ENCODE measurements at regions of chr1 and their contacts with region 1.

Region 1: DNA sequence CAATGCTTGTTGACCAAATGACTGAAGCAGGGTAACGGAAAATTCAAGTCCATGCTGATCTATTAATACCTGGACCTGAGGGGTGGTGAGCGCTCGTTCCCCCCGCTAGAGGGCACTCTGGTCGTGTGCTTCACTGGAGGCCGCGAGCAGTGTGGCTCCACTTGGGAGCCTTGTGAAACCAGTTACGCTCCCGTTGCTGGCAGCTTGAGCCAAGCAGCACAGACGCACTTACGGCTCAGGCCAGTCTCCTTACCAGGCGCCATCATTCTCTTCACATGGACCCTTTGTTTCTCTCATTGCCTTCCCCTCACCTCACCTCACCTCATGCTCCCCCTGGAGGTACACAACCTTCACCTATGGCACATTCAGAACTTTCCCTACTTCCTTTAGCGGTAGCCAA is 49.7 kb upstream of the TSPAN2 start:
- DNase-seq: peak; percentile 60 to 95
- H3K4me3 ChIP-seq: no peak overlapping the region
- H3K27ac ChIP-seq: peak overlapping the region; percentile 54 to 92
- H3K4me1 ChIP-seq: peaks cover 10 to 32% of the 10 kb centered on the region in 2 donors
- H3K27me3 ChIP-seq: no peaks in the 10 kb centered on the region
- CTCF ChIP-seq: peak; percentile 85 to 90 (median 89)

Region 2: DNA sequence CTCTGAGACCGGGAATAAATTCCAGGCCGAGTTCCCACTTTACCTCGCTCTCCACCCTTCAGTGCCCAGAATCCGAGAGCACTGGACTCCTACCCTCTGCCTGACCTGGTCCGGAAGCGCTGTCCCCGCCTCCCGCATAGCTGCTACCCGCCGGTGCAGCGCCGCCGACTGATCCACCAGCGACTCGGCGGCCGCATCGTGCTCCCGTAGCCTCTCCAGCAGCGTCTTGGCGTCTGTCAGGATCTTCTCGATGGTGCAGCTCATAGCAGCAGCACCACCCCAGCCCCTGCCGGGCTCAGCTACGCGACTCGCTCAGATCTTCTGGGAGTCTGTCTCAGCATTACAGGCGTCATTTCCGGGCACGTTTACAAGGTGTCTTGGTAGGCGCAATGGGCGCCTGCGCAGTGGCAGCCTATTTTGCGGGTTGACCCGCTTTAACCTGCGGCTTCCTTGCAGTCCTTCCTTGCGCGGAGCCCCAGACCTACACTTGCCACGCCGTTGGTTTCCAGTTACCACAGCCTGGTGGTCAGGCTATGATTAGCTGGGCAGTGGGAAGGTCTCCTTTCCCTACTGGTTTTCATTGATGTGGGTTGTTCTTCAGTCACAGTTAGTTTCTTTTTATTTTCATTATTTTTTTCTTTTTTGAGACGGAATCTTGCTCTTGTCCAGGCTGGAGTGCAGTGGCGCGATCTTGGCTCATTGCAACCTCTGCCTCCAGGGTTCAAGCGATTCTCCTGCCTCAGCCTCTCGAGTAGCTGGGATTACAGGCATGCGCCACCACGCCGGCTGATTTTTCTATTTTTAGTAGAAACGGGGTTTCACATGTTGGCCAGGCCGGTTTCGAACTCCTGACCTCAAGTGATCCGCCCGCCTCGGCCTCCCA is 358.4 kb before region 1 on chr1 and contains the start of gene SIKE1:
- intact Hi-C with region 1: loop called (anchors 10 kb)
- DNase-seq: peak; percentile 71 to 96
- H3K4me3 ChIP-seq: peak within 1 kb of the TSS; percentile 76 to 92
- H3K27ac ChIP-seq: peak within 1 kb of the TSS; percentile 90
- H3K4me1 ChIP-seq: peaks cover 0 to 8% of the 10 kb centered on the region in 2 donors
- H3K27me3 ChIP-seq: no peaks in the 10 kb centered on the region
- CTCF ChIP-seq: no peak
- total RNA-seq, gene SIKE1: 17.1 TPM

Region 3: GRCh38 chr1:115184951-115185331 is 46.0 kb after region 1 on chr1:
- intact Hi-C with region 1: loop called (anchors 1 kb)
- DNase-seq: peak; percentile 58 to 89
- H3K4me3 ChIP-seq: peak overlapping the region; percentile 12 to 50
- H3K27ac ChIP-seq: peak overlapping the region; percentile 89 to 95
- H3K4me1 ChIP-seq: peaks cover 16 to 39% of the 10 kb centered on the region in 2 donors
- H3K27me3 ChIP-seq: no peaks in the 10 kb centered on the region
- CTCF ChIP-seq: no peak

Region 4: GRCh38 chr1:115337633-115338456 is 198.9 kb after region 1 on chr1 and contains the start of gene NGF:
- intact Hi-C with region 1: loop called (anchors 2 kb)
- DNase-seq: peak; percentile 29 to 89
- H3K4me3 ChIP-seq: peak within 1 kb of the TSS; percentile 56 to 69
- H3K27ac ChIP-seq: peak within 1 kb of the TSS; percentile 87 to 89
- H3K4me1 ChIP-seq: peaks cover 9 to 33% of the 10 kb centered on the region in 2 donors
- H3K27me3 ChIP-seq: no peaks in the 10 kb centered on the region
- CTCF ChIP-seq: no peak
- total RNA-seq, gene NGF: 2.1 TPM

Region 5: DNA sequence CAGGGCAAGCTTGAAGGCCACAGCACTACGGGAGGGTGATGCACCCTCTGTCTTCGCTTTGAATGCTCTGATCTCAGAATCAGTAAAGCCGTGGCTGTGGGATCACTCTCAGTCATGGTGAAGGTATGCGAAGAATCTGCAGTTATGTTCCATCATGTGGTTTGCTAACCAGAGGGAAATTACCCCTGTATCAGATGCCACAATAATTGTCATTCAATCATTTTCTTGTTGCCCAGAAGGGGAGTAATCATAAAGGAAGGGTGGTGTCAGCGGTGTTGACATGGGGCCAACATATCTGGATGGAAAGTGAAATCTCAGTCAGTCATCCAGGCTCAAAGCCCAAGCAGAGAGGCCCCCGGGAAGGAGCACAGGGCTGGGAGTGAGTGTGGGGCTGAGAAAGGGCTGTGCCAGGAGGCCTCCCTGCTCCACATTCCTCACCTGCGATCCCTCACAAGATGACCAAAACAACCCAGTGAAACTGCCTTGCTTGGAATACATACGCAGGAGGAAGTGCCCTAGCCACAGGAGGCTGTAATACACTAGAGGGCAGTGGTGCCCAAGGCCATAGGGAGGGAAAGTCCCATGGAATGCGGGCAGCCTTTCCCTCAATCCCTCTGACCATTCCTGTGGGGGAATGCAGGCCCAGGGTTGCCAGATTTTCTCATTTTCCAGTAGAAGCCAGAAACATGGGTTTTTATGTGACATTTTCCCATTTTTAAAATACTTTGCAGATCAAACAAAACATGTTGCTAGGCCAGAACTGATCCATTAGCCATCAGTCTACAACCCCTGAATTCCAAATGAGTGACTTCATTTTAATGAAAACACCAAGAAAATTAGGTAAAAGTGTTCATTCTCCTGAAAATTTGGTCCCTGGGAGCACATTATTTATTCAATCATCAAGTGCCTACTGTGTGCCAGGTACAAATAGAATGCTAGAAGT is 407.1 kb after region 1 on chr1:
- intact Hi-C with region 1: loop called (anchors 1 kb)
- DNase-seq: peak in 1 of 2 donors; percentile 73
- H3K4me3 ChIP-seq: no peak overlapping the region
- H3K27ac ChIP-seq: peak overlapping the region; percentile 51 to 62
- H3K4me1 ChIP-seq: peaks cover 0 to 5% of the 10 kb centered on the region in 2 donors
- H3K27me3 ChIP-seq: no peaks in the 10 kb centered on the region
- CTCF ChIP-seq: peak in 2 of 3 experiments; percentile 33 to 62

Region 6: GRCh38 chr1:115976062-115976920 is 837.3 kb after region 1 on chr1 and contains the start of gene SLC22A15:
- intact Hi-C with region 1: loop called (anchors 10 kb)
- DNase-seq: peak; percentile 34 to 79
- H3K4me3 ChIP-seq: peak within 1 kb of the TSS; percentile 83 to 94
- H3K27ac ChIP-seq: peak within 1 kb of the TSS; percentile 74 to 79
- H3K4me1 ChIP-seq: no peaks in the 10 kb centered on the region
- H3K27me3 ChIP-seq: no peaks in the 10 kb centered on the region
- CTCF ChIP-seq: no peak
- total RNA-seq, gene SLC22A15: 5.6 TPM

Measured in ascending aorta (tissue), 2 donors.